ENCODE measurements at regions of chr11 and their contacts with region 1.

Region 1: DNA sequence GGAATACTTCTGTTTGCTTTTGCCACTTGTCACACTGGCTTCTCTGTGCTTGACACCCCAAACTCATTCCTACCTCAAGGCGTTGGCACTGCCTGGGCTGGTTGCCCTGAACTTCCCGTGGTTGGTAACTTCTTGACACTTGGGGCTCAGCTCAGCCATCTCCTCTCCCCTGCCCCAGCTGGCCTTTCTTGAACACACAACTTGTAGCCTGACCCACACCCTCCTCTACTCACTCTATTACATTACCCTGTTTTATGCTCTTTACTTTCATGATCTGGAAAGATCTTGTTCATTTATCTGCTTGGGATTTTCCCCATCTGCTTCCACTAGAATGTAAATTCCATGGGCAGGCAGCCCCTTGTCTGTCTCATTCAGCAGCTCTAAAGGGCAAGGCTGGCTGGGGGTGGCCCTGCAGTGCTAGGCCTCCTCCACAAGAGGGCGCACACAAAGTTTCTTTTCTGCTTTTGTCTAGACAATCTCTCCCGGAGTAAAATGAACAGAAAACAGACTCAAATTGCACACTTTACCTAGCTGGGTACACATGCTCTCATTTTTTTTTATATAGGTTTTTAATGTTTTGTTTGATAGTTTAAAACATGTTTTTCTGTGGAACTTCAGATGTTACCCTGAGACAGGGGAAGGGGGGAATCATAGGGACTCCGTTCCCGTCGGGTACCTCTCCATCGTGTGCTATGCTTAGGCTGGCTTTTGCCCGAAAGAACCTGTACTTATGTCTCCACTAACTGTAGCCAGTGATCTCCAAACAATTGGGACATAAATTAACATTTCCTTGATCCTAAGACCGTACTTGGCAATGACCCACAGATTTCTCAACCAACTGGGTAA is 16.4 kb upstream of the MRGPRX2 start:
- DNase-seq: peak; percentile 80
- ATAC-seq: peak; percentile 56
- H3K4me3 Mint-ChIP-seq: no peak overlapping the region
- H3K27ac Mint-ChIP-seq: no peak overlapping the region
- H3K4me1 Mint-ChIP-seq: peaks cover 26% of the 10 kb centered on the region
- H3K27me3 Mint-ChIP-seq: no peaks in the 10 kb centered on the region
- CTCF ChIP-seq: peak; percentile 96

Region 2: DNA sequence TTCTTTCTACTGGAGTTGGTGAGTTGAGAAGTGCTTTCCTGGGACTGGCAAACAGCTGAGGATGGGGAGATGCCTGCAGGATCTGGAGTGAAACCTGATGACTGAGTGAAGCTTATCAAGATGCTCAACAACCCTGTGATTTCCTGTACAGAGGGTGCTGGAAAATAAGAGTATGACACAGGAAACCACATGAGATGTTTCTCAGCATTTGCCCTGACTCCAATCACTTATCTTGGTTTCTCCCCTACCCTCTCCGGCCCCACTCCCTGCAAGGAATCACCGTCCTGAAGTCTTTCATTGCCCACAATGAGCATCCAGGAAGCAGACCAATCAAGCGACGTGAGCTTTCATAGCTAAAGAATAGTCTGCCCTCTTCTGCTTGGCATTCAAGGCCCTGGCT is 16.3 kb before region 1 on chr11 and contains the start of gene MRGPRX2:
- CTCF ChIA-PET with region 1: interaction called, 10 read pairs
- POLR2A ChIA-PET with region 1: no interaction called
- DNase-seq: no peak
- ATAC-seq: no peak
- H3K4me3 Mint-ChIP-seq: no peak within 1 kb of the TSS
- H3K27ac Mint-ChIP-seq: no peak within 1 kb of the TSS
- H3K4me1 Mint-ChIP-seq: no peaks in the 10 kb centered on the region
- H3K27me3 Mint-ChIP-seq: peaks cover 15% of the 10 kb centered on the region
- CTCF ChIP-seq: no peak
- total RNA-seq, gene MRGPRX2: not detected in 3 replicates

Region 3: GRCh38 chr11:19116971-19117750 is 40.2 kb after region 1 on chr11 and contains the start of gene ZDHHC13:
- CTCF ChIA-PET with region 1: interaction called, 21 read pairs
- POLR2A ChIA-PET with region 1: no interaction called
- DNase-seq: peak; percentile 98
- ATAC-seq: peak; percentile 96
- H3K4me3 Mint-ChIP-seq: peak within 1 kb of the TSS; percentile 84
- H3K27ac Mint-ChIP-seq: peak within 1 kb of the TSS; percentile 63; the same call in 1 of the 2 replicates
- H3K4me1 Mint-ChIP-seq: peaks cover 36% of the 10 kb centered on the region
- H3K27me3 Mint-ChIP-seq: peaks cover 3% of the 10 kb centered on the region; the same call in 1 of the 2 replicates
- CTCF ChIP-seq: no peak
- total RNA-seq, gene ZDHHC13: 19.4 to 23.6 TPM (median 20.9 TPM) in 3 replicates

Measured in WTC11 (cell line).